Heart left ventricle (tissue), 16 donors: ENCODE measurements at regions of chr15 and their contacts with region 1.

Region 1: DNA sequence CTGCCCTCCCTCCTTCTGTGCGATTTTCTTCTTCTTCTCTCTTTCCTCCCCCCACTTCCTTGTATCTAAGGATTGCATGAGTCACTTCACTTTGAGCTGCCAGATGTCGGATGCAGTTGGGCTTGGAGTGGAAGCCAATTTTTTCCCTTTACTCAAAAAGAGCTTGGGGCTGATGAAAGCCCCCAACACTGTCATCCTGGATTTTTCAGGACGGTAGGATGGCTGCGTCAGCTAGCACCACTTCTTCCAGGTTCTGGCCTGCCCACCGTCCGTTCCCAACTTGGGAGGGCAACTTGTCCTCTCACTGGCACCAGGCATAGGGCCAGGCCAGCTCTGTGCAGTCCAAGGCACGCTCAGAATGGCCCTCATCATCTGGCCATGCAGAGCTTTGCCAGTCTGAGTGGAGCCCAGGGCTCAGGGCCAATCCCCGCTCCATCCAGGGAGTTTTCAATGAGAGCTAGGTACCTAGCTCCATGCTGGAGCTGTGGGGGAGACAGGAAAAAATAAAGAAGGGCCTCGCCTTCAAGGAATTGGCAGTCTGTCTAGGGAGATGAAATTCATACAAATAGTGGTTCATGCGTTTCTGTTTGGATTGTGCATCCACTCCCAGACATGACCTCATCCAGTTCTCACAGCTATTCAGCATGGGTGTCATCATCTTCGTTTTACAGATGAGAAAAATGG is 47.7 kb upstream of the INSYN1 start:
- DNase-seq: peak; percentile 77 to 91 (median 83)
- ATAC-seq: peak; percentile 72 to 88 (median 84)
- H3K4me3 ChIP-seq: no peak overlapping the region
- H3K27ac ChIP-seq: peak overlapping the region; percentile 40 to 87 (median 78)
- H3K4me1 ChIP-seq: peaks cover 12 to 67% (median 37%) of the 10 kb centered on the region in 12 donors
- H3K27me3 ChIP-seq: no peaks in the 10 kb centered on the region
- CTCF ChIP-seq: no peak
- POLR2A ChIP-seq: no peak

Region 2: GRCh38 chr15:73753250-73754130 is 47.3 kb before region 1 on chr15 and contains the start of gene INSYN1:
- intact Hi-C with region 1: loop called in 2 of 10 experiments (anchors 5 kb)
- DNase-seq: peak; percentile 65 to 79 (median 68)
- ATAC-seq: peak in 3 of 4 donors; percentile 73 to 79 (median 75)
- H3K4me3 ChIP-seq: peak within 1 kb of the TSS; percentile 57 to 92 (median 70)
- H3K27ac ChIP-seq: peak within 1 kb of the TSS in 10 of 12 donors; percentile 40 to 80 (median 56)
- H3K4me1 ChIP-seq: peaks cover 0 to 40% (median 10%) of the 10 kb centered on the region in 12 donors
- H3K27me3 ChIP-seq: peaks cover 0 to 43% (median 7%) of the 10 kb centered on the region in 9 donors
- CTCF ChIP-seq: no peak
- POLR2A ChIP-seq: no peak
- total RNA-seq, gene INSYN1: 51.5 to 182 (median 83.0) TPM

Region 3: DNA sequence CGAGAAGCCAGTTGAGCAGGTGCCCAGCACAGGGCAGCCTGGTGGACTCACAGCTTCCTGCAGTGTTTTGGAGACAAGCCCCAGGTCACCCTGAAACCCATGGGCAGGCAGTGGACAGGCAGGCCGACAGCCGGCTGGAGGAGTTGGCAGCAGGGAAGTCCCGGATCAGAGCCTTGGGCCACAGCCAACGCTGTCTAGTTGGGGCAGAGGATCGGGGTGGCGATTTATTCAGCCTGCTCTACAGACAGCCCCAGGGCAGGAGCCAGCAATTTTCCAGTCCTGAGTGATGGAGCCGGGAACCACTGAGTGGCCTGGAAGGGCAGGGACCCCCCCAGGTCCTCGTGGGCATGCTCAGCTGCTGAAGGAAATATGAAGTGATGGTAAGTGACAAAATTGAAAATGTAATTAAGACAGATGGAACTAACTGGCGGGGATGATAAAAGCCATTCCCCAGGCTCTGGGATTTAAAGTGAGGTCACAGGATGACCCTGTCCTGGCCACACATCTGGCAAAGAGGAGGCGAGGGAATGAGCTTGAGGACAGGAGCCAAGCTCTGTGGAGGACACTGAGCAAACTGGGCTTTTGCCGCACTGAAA is 38.1 kb after region 1 on chr15:
- intact Hi-C with region 1: loop called in 1 of 10 experiments (anchors 2 kb)
- DNase-seq: peak; percentile 81 to 93 (median 85)
- ATAC-seq: peak; percentile 97 to 98 (median 98)
- H3K4me3 ChIP-seq: no peak overlapping the region
- H3K27ac ChIP-seq: peak overlapping the region in 6 of 12 donors; percentile 15 to 78 (median 48)
- H3K4me1 ChIP-seq: peaks cover 0 to 12% (median 2%) of the 10 kb centered on the region in 12 donors
- H3K27me3 ChIP-seq: peaks cover 0 to 4% (median 0%) of the 10 kb centered on the region in 9 donors
- CTCF ChIP-seq: peak in 3 of 12 donors; percentile 5 to 16 (median 8)
- POLR2A ChIP-seq: no peak